ENCODE measurements at regions of chr9 and their contacts with region 1.

Region 1: DNA sequence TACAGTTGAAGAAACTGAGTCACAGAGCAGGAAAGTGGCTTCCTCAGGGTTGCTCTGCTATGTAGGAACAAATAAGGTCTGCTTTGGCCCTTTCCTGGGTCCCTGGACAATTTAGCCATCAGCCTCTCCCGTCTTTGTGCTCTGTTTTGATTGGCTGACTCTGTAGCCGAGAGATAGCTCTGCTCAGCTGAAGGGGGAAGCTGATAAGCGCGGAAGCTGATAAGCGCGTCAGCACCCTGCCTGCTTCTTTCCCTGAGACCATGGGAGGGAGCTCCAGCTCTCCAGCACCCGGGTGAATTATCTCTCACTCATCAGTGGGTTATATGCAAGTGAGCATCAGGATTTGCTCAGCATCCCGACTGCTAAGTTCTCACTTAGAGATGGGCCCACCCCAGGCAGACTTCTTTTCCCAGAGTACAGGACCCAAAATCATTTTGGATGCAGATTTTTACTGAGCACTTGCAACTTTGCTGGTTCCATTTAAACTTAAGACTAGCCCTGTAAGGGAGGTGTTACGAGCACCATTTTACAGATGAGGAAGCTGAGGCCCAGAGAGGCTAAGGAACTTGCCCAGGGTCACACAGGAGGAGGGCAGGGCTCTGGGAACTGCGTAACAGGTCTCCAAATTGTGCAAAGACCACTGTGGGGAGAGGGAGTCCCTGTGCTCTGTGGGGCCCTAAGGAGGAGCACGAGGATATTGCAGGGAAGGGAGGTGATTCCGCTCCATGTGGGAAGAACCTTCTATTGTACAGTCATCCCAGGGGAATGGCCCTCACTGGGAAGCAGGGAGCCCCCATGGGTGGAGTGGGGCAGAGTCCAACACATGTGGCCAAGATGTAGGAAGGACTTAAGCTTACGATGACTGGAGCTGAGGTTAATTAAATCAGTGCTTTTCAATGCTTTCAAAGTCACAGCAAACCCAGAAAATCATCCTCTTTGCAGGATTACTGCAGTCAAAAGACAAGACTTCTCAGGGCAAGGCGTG is 83.7 kb upstream of the ORM1 start:
- DNase-seq: peak; percentile 94
- H3K4me3 ChIP-seq: no peak overlapping the region
- H3K27ac ChIP-seq: no peak overlapping the region; a peak in 1 of 4 replicates
- H3K4me1 ChIP-seq: peaks cover 0 to 42% of the 10 kb centered on the region in 2 experiments; a peak in 2 of 4 replicates
- H3K27me3 ChIP-seq: no peaks in the 10 kb centered on the region
- CTCF ChIP-seq: peak; percentile 46
- EP300 ChIP-seq: 0 out of 4 replicates have a peak, but pooled peaks of 1 of the 2 experiments have one; percentile 21
- RAD21 ChIP-seq: peak; percentile 87

Region 2: GRCh38 chr9:114263853-114264510 is 24.8 kb after region 1 on chr9:
- CTCF ChIA-PET with region 1: interaction called, 57 read pairs
- POLR2A ChIA-PET with region 1: interaction called, 3 read pairs
- DNase-seq: no peak
- H3K4me3 ChIP-seq: no peak overlapping the region
- H3K27ac ChIP-seq: no peak overlapping the region
- H3K4me1 ChIP-seq: peaks cover 0 to 19% of the 10 kb centered on the region in 2 experiments; a peak in 1 of 4 replicates
- H3K27me3 ChIP-seq: no peaks in the 10 kb centered on the region
- CTCF ChIP-seq: no peak
- EP300 ChIP-seq: no peak
- RAD21 ChIP-seq: peak; percentile 28; the same call in 1 of the 2 replicates

Region 3: DNA sequence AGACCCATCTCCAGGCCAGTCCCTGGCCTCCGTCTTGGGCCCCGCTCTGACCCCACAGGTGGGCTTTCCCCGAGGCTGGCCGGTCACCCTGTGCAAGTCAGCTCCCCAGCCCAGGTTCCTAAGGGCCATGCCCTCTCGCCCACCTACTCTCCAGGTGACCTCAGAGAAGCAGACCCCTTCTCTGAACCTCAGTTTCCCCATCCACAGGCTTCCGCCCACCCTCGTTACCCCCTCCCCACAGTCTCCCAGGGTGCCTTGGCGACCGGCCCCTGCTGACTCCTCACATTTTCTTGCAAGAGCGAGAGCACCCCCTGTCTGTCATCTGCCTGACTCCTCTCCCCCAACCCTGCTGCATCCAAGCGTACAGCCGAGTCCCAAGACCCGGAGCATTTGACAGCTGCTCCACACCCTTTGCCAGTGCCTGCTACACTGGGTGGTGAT is 32.5 kb after region 1 on chr9:
- CTCF ChIA-PET with region 1: interaction called, 57 read pairs
- POLR2A ChIA-PET with region 1: no interaction called
- DNase-seq: peak; percentile 78
- H3K4me3 ChIP-seq: no peak overlapping the region
- H3K27ac ChIP-seq: no peak overlapping the region
- H3K4me1 ChIP-seq: peaks cover 0 to 2% of the 10 kb centered on the region in 2 experiments; a peak in 1 of 4 replicates
- H3K27me3 ChIP-seq: no peaks in the 10 kb centered on the region
- CTCF ChIP-seq: peak; percentile 55
- EP300 ChIP-seq: no peak
- RAD21 ChIP-seq: peak; percentile 80

Region 4: GRCh38 chr9:114472765-114473446 is 233.7 kb after region 1 on chr9:
- CTCF ChIA-PET with region 1: no interaction called
- POLR2A ChIA-PET with region 1: no interaction called
- DNase-seq: no peak
- H3K4me3 ChIP-seq: no peak overlapping the region
- H3K27ac ChIP-seq: no peak overlapping the region
- H3K4me1 ChIP-seq: no peaks in the 10 kb centered on the region
- H3K27me3 ChIP-seq: no peaks in the 10 kb centered on the region; the same call in 1 of the 2 replicates
- CTCF ChIP-seq: no peak
- EP300 ChIP-seq: no peak
- RAD21 ChIP-seq: no peak

Measured in SK-N-SH (cell line).